ENCODE measurements at regions of chr15 and their contacts with region 1.

Region 1: GRCh38 chr15:99733268-99734039 is at the start of gene LYSMD4:
- DNase-seq: peak; percentile 60
- ATAC-seq: peak; percentile 99
- H3K4me3 ChIP-seq: peak within 1 kb of the TSS; percentile 72 to 93
- H3K27ac ChIP-seq: peak within 1 kb of the TSS; percentile 86
- H3K4me1 ChIP-seq: peaks cover 5% of the 10 kb centered on the region; the same call in 1 of the 2 replicates
- H3K27me3 ChIP-seq: no peaks in the 10 kb centered on the region
- CTCF ChIP-seq: no peak
- total RNA-seq, gene LYSMD4: 8.9 TPM

Region 2: GRCh38 chr15:99433034-99433756 is 300.3 kb before region 1 on chr15:
- CTCF ChIA-PET with region 1: interaction called, 10 read pairs
- POLR2A ChIA-PET with region 1: no interaction called
- in situ Hi-C with region 1: no loop called
- intact Hi-C with region 1: no loop called
- DNase-seq: no peak
- ATAC-seq: no peak
- H3K4me3 ChIP-seq: no peak overlapping the region
- H3K27ac ChIP-seq: no peak overlapping the region
- H3K4me1 ChIP-seq: peaks cover 8% of the 10 kb centered on the region; the same call in 1 of the 2 replicates
- H3K27me3 ChIP-seq: no peaks in the 10 kb centered on the region
- CTCF ChIP-seq: no peak

Region 3: GRCh38 chr15:100290919-100291495 is 557.6 kb after region 1 on chr15:
- CTCF ChIA-PET with region 1: no interaction called
- POLR2A ChIA-PET with region 1: no interaction called
- in situ Hi-C with region 1: no loop called
- intact Hi-C with region 1: no loop called
- DNase-seq: no peak
- ATAC-seq: no peak
- H3K4me3 ChIP-seq: no peak overlapping the region
- H3K27ac ChIP-seq: no peak overlapping the region
- H3K4me1 ChIP-seq: no peaks in the 10 kb centered on the region
- H3K27me3 ChIP-seq: no peaks in the 10 kb centered on the region
- CTCF ChIP-seq: no peak

Measured in Panc1 (cell line).